ENCODE measurements at regions of chr11 and their contacts with region 1.

Region 1: DNA sequence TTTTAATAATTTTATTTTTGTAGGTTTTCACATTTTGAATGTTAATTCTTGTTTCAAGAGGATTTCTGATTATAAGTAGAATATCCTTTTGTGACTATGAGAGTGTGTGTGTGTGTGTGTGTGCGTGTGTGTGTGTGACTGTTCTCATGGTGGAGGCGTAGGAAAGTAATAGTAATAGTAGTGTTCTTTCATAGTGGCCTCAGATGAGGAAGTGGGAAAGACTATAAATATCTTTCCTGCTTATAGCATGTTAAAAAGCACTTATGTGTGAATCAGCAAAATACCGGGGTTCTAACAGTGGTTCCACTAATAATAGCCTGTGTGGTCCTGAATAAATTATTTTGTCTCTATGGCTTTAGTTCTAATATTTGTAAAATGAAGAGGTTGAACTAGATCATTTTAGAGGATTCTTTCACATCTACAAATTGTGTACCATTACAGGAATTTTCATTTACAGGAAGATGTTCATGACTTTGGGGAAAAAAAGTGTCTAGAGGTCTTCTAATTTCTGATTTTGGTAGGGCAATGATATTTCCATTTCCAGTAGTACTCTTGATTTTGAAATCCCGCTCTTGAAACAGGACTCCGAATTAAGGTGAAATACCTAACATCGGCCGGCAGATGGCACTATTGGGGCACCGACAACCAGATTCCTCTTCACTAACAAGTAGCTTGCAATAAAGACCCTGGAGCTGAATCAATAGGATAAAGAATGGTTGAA is 29.9 kb upstream of the OR10G7 start:
- DNase-seq: peak; percentile 67
- H3K4me3 ChIP-seq: no peak overlapping the region
- H3K27ac ChIP-seq: no peak overlapping the region
- H3K27me3 ChIP-seq: peaks cover 3% of the 10 kb centered on the region
- CTCF ChIP-seq: peak; percentile 78

Region 2: DNA sequence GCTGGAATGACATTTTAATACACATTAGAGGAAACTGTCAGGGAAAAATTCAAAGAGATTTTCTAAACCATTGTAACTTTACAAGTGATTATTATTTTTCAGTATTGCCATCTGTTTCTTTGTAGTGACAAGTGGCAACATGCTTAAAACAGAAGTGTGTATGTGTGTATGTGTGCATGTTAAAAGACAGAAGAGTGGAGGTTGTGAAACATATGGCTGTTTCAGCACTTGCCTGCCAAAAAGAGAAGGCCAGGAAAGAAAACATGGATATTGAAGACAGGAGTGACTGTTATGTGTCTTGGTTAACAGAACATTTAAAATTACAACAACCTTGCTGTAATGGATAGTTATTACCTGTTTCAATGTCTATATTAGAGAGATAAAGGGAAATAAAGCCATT is 19.9 kb after region 1 on chr11:
- CTCF ChIA-PET with region 1: no interaction called
- POLR2A ChIA-PET with region 1: no interaction called
- DNase-seq: no peak
- H3K4me3 ChIP-seq: no peak overlapping the region
- H3K27ac ChIP-seq: no peak overlapping the region
- H3K27me3 ChIP-seq: no peaks in the 10 kb centered on the region
- CTCF ChIP-seq: no peak

Region 3: DNA sequence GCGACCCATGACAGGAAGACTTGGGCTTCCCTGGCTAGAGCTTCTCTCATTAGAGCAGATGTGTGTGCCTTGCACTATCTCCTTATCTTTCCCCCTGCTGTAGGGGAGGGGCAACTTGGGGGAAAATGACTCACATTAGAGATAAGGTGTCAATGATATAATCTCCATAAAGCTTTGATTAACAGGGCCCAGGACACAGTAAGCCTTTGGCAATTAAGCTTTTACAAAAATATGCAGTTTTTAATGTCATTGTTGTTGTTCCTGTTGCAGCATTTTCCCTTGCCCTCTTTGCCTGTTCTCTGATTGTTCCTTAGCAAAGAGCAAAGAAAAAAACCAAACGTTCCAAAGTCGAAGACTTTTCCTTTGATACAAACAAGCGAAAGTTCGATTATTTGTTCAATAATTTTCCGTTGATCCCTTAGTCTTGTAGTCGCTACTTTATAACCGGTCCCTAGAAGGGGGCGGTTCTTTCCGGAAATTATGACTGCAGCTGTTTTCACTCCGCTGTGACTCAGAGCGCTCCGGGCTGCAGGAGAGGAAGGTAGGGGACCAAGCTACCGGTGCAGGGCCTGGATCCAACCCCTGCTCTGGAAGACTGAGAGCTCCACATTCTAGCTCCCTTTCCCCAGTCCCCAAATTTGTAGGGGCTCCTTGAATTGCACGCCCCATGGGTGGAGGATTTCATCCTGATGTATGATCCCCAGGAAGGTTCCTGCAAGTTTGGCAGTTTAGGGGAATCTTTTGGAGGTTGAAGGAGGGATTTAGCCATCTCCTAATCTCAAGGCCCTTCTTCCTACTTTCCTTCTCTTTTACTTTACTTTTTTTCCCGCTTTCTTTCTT is 44.1 kb after region 1 on chr11 and contains the start of gene VWA5A:
- CTCF ChIA-PET with region 1: interaction called, 13 read pairs
- POLR2A ChIA-PET with region 1: interaction called, 6 read pairs
- DNase-seq: peak; percentile 58
- H3K4me3 ChIP-seq: peak within 1 kb of the TSS; percentile 74
- H3K27ac ChIP-seq: no peak within 1 kb of the TSS
- H3K27me3 ChIP-seq: no peaks in the 10 kb centered on the region
- CTCF ChIP-seq: no peak
- polyA plus RNA-seq, gene VWA5A: 26.9 and 27.9 TPM in 2 replicates

Region 4: GRCh38 chr11:124194698-124195410 is 123.8 kb after region 1 on chr11:
- CTCF ChIA-PET with region 1: interaction called, 88 read pairs
- POLR2A ChIA-PET with region 1: no interaction called
- DNase-seq: peak; percentile 32
- H3K4me3 ChIP-seq: no peak overlapping the region
- H3K27ac ChIP-seq: no peak overlapping the region
- H3K27me3 ChIP-seq: no peaks in the 10 kb centered on the region
- CTCF ChIP-seq: peak; percentile 83

Region 5: DNA sequence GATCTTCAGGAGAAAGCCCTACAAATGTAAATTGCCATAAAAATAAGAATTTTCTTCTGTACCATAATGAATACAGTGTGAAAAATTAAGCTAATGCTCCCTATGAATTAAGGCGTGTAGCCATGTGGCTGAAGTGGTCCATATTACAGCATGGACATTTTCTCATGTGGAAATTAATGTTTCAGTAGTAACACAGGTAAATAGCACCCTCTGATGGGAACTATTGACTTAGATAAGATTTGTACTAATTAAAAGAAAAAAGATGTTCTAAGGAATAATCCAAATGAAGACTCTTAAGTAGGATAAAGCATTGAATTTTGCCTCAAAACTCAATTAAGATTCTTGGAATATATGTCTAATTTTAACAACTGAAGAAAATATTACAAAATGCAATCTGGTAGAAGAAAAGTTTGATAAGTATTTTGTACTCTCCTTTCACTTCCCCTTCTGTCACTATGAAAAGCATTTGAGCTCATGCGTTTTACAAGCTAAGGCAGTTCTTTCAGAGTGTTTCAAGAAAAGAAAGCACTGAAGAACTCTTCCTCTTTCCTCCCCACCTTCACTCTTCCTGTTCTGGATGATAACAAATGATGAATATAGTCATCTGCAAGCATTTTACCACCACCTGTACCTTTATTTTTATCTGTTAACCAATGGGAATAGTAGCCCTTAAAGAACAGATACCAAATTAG is 258.9 kb after region 1 on chr11:
- CTCF ChIA-PET with region 1: interaction called, 152 read pairs
- POLR2A ChIA-PET with region 1: no interaction called
- DNase-seq: no peak
- H3K4me3 ChIP-seq: no peak overlapping the region
- H3K27ac ChIP-seq: no peak overlapping the region
- H3K27me3 ChIP-seq: no peaks in the 10 kb centered on the region
- CTCF ChIP-seq: 0 out of 2 replicates have a peak, but pooled peaks have one; percentile 1

Region 6: GRCh38 chr11:124454552-124454951 is 383.5 kb after region 1 on chr11:
- CTCF ChIA-PET with region 1: no interaction called
- POLR2A ChIA-PET with region 1: no interaction called
- DNase-seq: no peak
- H3K4me3 ChIP-seq: no peak overlapping the region
- H3K27ac ChIP-seq: no peak overlapping the region
- H3K27me3 ChIP-seq: no peaks in the 10 kb centered on the region
- CTCF ChIP-seq: no peak

Region 7: DNA sequence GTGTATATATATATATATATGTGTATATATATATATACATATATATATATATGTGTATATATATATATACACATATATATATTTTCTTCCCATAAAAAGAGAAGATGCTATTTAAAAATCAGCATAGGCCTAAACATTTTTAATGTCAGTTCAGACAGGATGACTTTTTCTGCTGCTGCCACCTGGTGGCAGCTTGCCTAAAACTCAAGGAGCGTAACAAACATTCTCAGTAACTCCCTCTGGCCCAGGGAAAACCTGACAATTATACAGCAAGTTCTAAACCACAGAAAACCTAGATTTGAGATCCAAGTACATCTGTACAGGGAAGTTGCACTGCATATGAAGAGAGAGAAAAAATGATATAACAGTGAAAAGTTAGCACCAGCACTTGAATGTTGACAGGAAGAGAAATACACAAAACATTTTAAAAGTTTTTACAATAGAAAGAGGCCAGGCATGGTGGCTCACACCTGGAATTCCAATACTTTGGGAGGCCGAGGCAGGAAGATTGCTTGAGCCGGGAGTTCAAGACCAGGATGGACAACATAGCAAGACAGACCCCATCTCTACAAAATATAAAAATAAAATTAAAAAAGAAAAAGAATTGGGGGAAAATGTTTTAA is 515.3 kb after region 1 on chr11:
- CTCF ChIA-PET with region 1: interaction called, 20 read pairs
- POLR2A ChIA-PET with region 1: no interaction called
- DNase-seq: peak; percentile 23
- H3K4me3 ChIP-seq: no peak overlapping the region
- H3K27ac ChIP-seq: no peak overlapping the region
- H3K27me3 ChIP-seq: peaks cover 10% of the 10 kb centered on the region
- CTCF ChIP-seq: peak; percentile 74

Measured in AG04450 (cell line).